Mammary epithelial cell (primary cell): ENCODE measurements at regions of chr9 and their contacts with region 1.

Region 1: GRCh38 chr9:15211160-15211814 is 95.7 kb downstream of the TTC39B start:
- DNase-seq: peak; percentile 52
- H3K4me3 ChIP-seq: no peak overlapping the region
- H3K27ac ChIP-seq: no peak overlapping the region
- H3K4me1 ChIP-seq: peaks cover 5% of the 10 kb centered on the region
- H3K27me3 ChIP-seq: no peaks in the 10 kb centered on the region
- CTCF ChIP-seq: peak; percentile 84 to 91

Region 2: GRCh38 chr9:15104826-15105420 is 106.4 kb before region 1 on chr9:
- CTCF ChIA-PET with region 1: no interaction called
- dilution Hi-C with region 1: no loop called
- in situ Hi-C with region 1: loop called in 1 of 2 experiments (anchors 25 kb)
- intact Hi-C with region 1: no loop called
- DNase-seq: peak; percentile 20
- H3K4me3 ChIP-seq: no peak overlapping the region
- H3K27ac ChIP-seq: no peak overlapping the region
- H3K4me1 ChIP-seq: no peaks in the 10 kb centered on the region
- H3K27me3 ChIP-seq: no peaks in the 10 kb centered on the region
- CTCF ChIP-seq: peak; percentile 69 to 86

Region 3: GRCh38 chr9:15249042-15249818 is 37.9 kb after region 1 on chr9:
- CTCF ChIA-PET with region 1: no interaction called
- dilution Hi-C with region 1: no loop called
- in situ Hi-C with region 1: no loop called
- intact Hi-C with region 1: no loop called
- DNase-seq: no peak
- H3K4me3 ChIP-seq: no peak overlapping the region
- H3K27ac ChIP-seq: no peak overlapping the region
- H3K4me1 ChIP-seq: peaks cover 21% of the 10 kb centered on the region
- H3K27me3 ChIP-seq: no peaks in the 10 kb centered on the region
- CTCF ChIP-seq: no peak

Region 4: GRCh38 chr9:15306757-15307534 is 95.7 kb after region 1 on chr9 and contains the start of gene TTC39B:
- CTCF ChIA-PET with region 1: no interaction called
- dilution Hi-C with region 1: loop called (anchors 5 kb)
- in situ Hi-C with region 1: no loop called
- intact Hi-C with region 1: loop called (anchors 1 kb)
- DNase-seq: peak; percentile 94
- H3K4me3 ChIP-seq: peak within 1 kb of the TSS; percentile 44 to 85 (median 83)
- H3K27ac ChIP-seq: peak within 1 kb of the TSS; percentile 60
- H3K4me1 ChIP-seq: peaks cover 27% of the 10 kb centered on the region
- H3K27me3 ChIP-seq: no peaks in the 10 kb centered on the region
- CTCF ChIP-seq: no peak
- total RNA-seq, gene TTC39B: 25.5 to 26.0 TPM

Region 5: DNA sequence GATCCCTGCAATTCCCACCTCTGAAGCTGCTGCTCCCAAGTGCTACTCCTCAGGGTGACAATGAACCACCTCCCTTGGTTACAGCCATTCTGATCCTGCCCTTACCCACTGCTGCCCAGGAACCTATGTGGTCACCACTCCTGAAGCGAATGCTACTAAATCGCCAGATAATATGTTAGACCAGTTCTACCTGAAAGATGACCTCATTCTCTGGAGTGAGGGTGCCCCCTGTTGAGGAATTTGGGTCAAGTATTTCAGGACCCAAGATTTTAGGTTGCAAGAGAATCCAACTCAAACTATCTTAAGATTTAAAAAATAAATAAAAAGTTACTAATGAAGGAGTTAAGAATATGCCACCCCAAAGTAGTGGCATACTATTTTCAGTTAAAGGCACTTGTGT is 205.6 kb after region 1 on chr9:
- CTCF ChIA-PET with region 1: no interaction called
- dilution Hi-C with region 1: no loop called
- in situ Hi-C with region 1: loop called (anchors 25 kb)
- intact Hi-C with region 1: loop called (anchors 1 kb)
- DNase-seq: peak; percentile 43
- H3K4me3 ChIP-seq: no peak overlapping the region
- H3K27ac ChIP-seq: no peak overlapping the region
- H3K4me1 ChIP-seq: peaks cover 4% of the 10 kb centered on the region
- H3K27me3 ChIP-seq: no peaks in the 10 kb centered on the region
- CTCF ChIP-seq: peak; percentile 49 to 65